ENCODE measurements at regions of chr2 and their contacts with region 1.

Region 1: GRCh38 chr2:84925724-84926376 is 20.4 kb downstream of the TMSB10 start:
- DNase-seq: peak; percentile 99
- ATAC-seq: peak; percentile 87
- H3K4me3 Mint-ChIP-seq: peak overlapping the region; percentile 85
- H3K27ac Mint-ChIP-seq: peak overlapping the region; percentile 84
- H3K4me1 Mint-ChIP-seq: peaks cover 40% of the 10 kb centered on the region
- H3K27me3 Mint-ChIP-seq: no peaks in the 10 kb centered on the region

Region 2: GRCh38 chr2:84498150-84498799 is 427.6 kb before region 1 on chr2:
- CTCF ChIA-PET with region 1: interaction called, 13 read pairs
- DNase-seq: no peak
- ATAC-seq: no peak
- H3K4me3 Mint-ChIP-seq: no peak overlapping the region
- H3K27ac Mint-ChIP-seq: no peak overlapping the region
- H3K4me1 Mint-ChIP-seq: peaks cover 5% of the 10 kb centered on the region
- H3K27me3 Mint-ChIP-seq: no peaks in the 10 kb centered on the region

Region 3: GRCh38 chr2:84870306-84870705 is 55.5 kb before region 1 on chr2:
- CTCF ChIA-PET with region 1: interaction called, 143 read pairs
- DNase-seq: peak; percentile 43
- ATAC-seq: no peak
- H3K4me3 Mint-ChIP-seq: no peak overlapping the region
- H3K27ac Mint-ChIP-seq: no peak overlapping the region
- H3K4me1 Mint-ChIP-seq: peaks cover 33% of the 10 kb centered on the region
- H3K27me3 Mint-ChIP-seq: no peaks in the 10 kb centered on the region

Region 4: GRCh38 chr2:84894758-84895520 is 30.9 kb before region 1 on chr2:
- CTCF ChIA-PET with region 1: interaction called, 101 read pairs
- DNase-seq: no peak
- ATAC-seq: peak; percentile 32
- H3K4me3 Mint-ChIP-seq: peak overlapping the region; percentile 35
- H3K27ac Mint-ChIP-seq: peak overlapping the region; percentile 75
- H3K4me1 Mint-ChIP-seq: peaks cover 64% of the 10 kb centered on the region
- H3K27me3 Mint-ChIP-seq: no peaks in the 10 kb centered on the region

Region 5: GRCh38 chr2:84939426-84940087 is 13.7 kb after region 1 on chr2:
- CTCF ChIA-PET with region 1: interaction called, 121 read pairs
- DNase-seq: peak; percentile 95
- ATAC-seq: peak; percentile 87
- H3K4me3 Mint-ChIP-seq: peak overlapping the region; percentile 67
- H3K27ac Mint-ChIP-seq: peak overlapping the region; percentile 96
- H3K4me1 Mint-ChIP-seq: peaks cover 52% of the 10 kb centered on the region
- H3K27me3 Mint-ChIP-seq: no peaks in the 10 kb centered on the region

Region 6: GRCh38 chr2:85288244-85288725 is 362.4 kb after region 1 on chr2:
- CTCF ChIA-PET with region 1: interaction called, 25 read pairs
- DNase-seq: no peak
- ATAC-seq: no peak
- H3K4me3 Mint-ChIP-seq: no peak overlapping the region
- H3K27ac Mint-ChIP-seq: no peak overlapping the region
- H3K4me1 Mint-ChIP-seq: peaks cover 35% of the 10 kb centered on the region
- H3K27me3 Mint-ChIP-seq: no peaks in the 10 kb centered on the region